ENCODE measurements at regions of chr7 and their contacts with region 1.

Region 1: GRCh38 chr7:143380255-143380645 is 895 bp upstream of the ZYX start:
- DNase-seq: peak; percentile 93
- ATAC-seq: peak; percentile 57
- H3K4me3 Mint-ChIP-seq: peak overlapping the region; percentile 82
- H3K27ac Mint-ChIP-seq: peak overlapping the region; percentile 89
- H3K4me1 Mint-ChIP-seq: peaks cover 39% of the 10 kb centered on the region
- H3K27me3 Mint-ChIP-seq: no peaks in the 10 kb centered on the region

Region 2: GRCh38 chr7:143263266-143264195 is 116.7 kb before region 1 on chr7 and contains the start of gene GSTK1:
- CTCF ChIA-PET with region 1: interaction called, 4 read pairs
- POLR2A ChIA-PET with region 1: interaction called, 3 read pairs
- intact Hi-C with region 1: loop called in 1 of 2 experiments (anchors 5 kb)
- DNase-seq: peak; percentile 91
- ATAC-seq: peak; percentile 94
- H3K4me3 Mint-ChIP-seq: peak within 1 kb of the TSS; percentile 98
- H3K27ac Mint-ChIP-seq: peak within 1 kb of the TSS; percentile 98
- H3K4me1 Mint-ChIP-seq: peaks cover 62% of the 10 kb centered on the region
- H3K27me3 Mint-ChIP-seq: no peaks in the 10 kb centered on the region
- total RNA-seq, gene GSTK1: 176 to 219 TPM

Region 3: GRCh38 chr7:143316492-143316891 is 63.8 kb before region 1 on chr7:
- CTCF ChIA-PET with region 1: no interaction called
- POLR2A ChIA-PET with region 1: no interaction called
- intact Hi-C with region 1: no loop called
- DNase-seq: no peak
- ATAC-seq: no peak
- H3K4me3 Mint-ChIP-seq: no peak overlapping the region
- H3K27ac Mint-ChIP-seq: no peak overlapping the region
- H3K4me1 Mint-ChIP-seq: no peaks in the 10 kb centered on the region
- H3K27me3 Mint-ChIP-seq: no peaks in the 10 kb centered on the region

Region 4: GRCh38 chr7:143345428-143345900 is 34.8 kb before region 1 on chr7:
- CTCF ChIA-PET with region 1: interaction called, 6 read pairs
- POLR2A ChIA-PET with region 1: no interaction called
- intact Hi-C with region 1: loop called in 1 of 2 experiments (anchors 5 kb)
- DNase-seq: peak; percentile 85
- ATAC-seq: peak; percentile 99
- H3K4me3 Mint-ChIP-seq: peak overlapping the region; percentile 52
- H3K27ac Mint-ChIP-seq: no peak overlapping the region
- H3K4me1 Mint-ChIP-seq: peaks cover 8% of the 10 kb centered on the region
- H3K27me3 Mint-ChIP-seq: peaks cover 8% of the 10 kb centered on the region

Region 5: GRCh38 chr7:143367972-143368371 is 12.3 kb before region 1 on chr7:
- CTCF ChIA-PET with region 1: interaction called, 19 read pairs
- POLR2A ChIA-PET with region 1: no interaction called
- intact Hi-C with region 1: loop called in 1 of 2 experiments (anchors 1 kb)
- DNase-seq: no peak
- ATAC-seq: no peak
- H3K4me3 Mint-ChIP-seq: no peak overlapping the region
- H3K27ac Mint-ChIP-seq: no peak overlapping the region
- H3K4me1 Mint-ChIP-seq: peaks cover 16% of the 10 kb centered on the region
- H3K27me3 Mint-ChIP-seq: peaks cover 25% of the 10 kb centered on the region

Region 6: DNA sequence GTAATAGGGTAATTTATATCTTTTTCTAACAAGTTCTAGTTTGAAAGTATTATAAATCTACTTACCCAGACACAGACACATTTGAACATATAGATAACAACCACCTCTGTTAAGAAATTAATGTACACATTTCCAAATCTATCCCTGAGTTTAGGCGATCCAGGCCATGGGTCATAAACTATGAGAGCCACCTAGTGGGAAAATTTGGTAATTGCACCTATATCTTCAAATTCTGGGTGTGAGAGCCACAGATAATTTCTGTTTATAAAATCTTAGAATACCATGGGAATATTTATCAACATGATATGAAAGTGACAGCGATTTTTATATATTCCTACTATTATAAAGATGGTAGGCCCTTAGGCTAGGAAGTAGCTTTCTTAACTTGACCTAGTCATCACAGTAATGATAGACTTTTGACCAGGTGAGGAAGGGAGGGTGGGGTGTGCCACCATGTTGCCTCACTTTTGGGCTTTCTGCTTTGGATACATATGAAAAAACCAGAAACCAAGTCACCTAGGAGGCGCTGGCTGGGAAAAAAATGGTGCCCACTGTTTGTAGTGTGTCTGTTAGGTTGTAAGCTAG is 36.4 kb after region 1 on chr7:
- CTCF ChIA-PET with region 1: interaction called, 15 read pairs
- POLR2A ChIA-PET with region 1: no interaction called
- intact Hi-C with region 1: loop called (anchors 1 to 2 kb)
- DNase-seq: no peak
- ATAC-seq: peak; percentile 45
- H3K4me3 Mint-ChIP-seq: no peak overlapping the region
- H3K27ac Mint-ChIP-seq: no peak overlapping the region
- H3K4me1 Mint-ChIP-seq: peaks cover 8% of the 10 kb centered on the region
- H3K27me3 Mint-ChIP-seq: no peaks in the 10 kb centered on the region

Measured in activated CD4-positive, alpha-beta T cell treated with anti-CD3 and anti-CD28 coated beads for 36 hours (primary cell).